Right ventricle myocardium inferior (tissue), 1 donor: ENCODE measurements at regions of chr11 and their contacts with region 1.

Region 1: GRCh38 chr11:118145285-118146227 is 7.1 kb downstream of the SCN4B start:
- DNase-seq: peak; percentile 92
- ATAC-seq: peak; percentile 89

Region 2: DNA sequence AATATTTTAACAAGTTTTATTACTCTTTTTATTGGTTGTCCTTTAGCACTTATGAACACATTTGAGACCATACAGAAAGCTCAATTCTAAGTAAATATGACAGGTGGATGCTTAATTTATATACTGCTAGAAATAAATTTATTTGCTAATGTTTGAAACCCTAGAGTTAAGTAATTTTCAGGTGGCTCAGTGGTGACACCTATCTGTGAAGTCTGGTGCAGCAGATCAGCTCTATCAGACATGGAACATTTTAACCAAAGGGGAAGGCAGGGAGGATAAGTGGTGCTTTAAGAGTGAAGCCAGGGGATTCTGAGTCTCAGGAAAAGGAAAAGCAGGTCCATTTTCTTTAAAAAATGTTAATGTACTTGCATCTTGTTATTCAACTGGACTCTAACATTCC is 524.3 kb before region 1 on chr11:
- intact Hi-C with region 1: no loop called
- DNase-seq: no peak
- ATAC-seq: no peak

Region 3: DNA sequence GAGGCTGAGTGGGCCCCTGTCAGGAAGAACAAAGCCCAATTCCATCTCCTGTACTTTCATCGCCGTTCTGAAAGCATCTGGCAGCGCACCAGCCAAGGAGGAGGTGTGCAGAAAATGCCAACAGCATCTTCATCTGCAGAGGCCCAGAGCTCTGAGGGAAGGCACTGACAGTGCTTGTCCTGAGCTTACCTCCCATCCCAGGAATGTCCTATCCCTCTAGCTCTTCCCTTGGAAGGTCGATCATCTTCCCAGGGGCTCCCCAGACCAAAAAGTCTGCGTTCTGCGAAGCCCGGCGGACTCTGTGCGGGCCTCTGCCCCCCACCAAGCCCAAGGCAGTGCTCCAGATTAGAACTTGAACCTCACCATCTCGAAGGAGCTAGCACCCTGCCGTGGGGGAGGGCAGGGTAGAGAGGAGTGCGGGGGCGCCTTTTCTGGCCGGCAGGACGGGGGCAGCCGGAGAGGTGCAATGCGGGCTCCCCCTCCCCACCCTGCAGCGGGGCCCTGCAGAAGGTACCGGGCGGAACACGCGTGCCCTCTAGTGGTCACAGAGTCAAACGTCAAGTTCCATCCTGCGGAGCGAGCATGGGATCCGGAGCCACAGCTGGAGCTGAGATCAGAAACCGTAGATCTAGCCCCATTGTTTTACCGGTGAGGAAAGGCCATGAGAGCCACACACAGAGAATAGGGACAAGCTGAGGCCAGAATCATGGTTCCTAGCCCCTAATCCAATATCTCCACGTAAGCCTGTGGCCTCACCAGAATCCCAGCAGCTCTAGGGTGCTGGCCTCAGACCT is 25.9 kb after region 1 on chr11:
- intact Hi-C with region 1: loop called (anchors 1 kb)
- DNase-seq: peak; percentile 88
- ATAC-seq: peak; percentile 66

Region 4: GRCh38 chr11:118186346-118187107 is 41.0 kb after region 1 on chr11:
- intact Hi-C with region 1: no loop called
- DNase-seq: no peak
- ATAC-seq: peak; percentile 50

Region 5: DNA sequence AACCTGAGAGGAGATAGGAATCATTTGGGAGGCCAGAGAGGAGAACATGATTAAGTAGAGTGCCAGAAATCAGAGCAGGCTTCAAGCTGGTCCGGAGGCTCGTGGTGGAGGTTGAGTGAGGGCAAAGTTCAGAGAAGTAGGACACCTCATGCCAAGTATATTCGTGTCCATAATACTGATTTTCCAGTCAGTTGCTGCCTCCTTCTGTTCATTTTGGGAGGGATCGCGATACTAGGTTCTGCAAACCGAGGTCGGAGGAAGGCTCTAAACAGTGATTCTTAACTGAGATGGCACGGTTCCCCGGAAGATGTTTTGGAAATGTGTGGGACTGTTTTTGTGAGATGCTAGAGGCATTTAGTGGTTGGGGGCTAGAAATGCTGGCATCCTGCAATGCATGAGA is 145.4 kb after region 1 on chr11:
- intact Hi-C with region 1: loop called (anchors 1 kb)
- DNase-seq: no peak
- ATAC-seq: peak; percentile 75

Region 6: DNA sequence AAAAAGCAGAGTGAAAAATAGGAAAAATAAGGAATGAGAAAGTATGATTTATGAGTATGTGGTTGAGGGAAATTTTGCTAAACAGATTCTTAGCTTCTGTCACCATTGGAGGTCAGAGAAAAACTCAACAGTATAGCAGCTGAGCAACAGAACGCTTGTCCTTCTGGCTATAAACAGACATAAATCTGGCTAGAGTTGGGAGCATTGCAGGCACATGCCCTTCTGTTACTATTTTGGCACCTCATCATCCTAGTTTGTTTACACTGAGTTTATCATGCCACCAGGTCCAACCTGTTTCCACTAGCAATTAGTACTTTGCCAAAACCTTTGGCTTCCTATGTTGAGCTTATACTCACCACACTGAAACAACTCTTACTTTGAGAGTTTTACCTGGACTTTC is 220.7 kb after region 1 on chr11:
- intact Hi-C with region 1: loop called (anchors 2 kb)
- DNase-seq: no peak
- ATAC-seq: peak; percentile 90

Region 7: DNA sequence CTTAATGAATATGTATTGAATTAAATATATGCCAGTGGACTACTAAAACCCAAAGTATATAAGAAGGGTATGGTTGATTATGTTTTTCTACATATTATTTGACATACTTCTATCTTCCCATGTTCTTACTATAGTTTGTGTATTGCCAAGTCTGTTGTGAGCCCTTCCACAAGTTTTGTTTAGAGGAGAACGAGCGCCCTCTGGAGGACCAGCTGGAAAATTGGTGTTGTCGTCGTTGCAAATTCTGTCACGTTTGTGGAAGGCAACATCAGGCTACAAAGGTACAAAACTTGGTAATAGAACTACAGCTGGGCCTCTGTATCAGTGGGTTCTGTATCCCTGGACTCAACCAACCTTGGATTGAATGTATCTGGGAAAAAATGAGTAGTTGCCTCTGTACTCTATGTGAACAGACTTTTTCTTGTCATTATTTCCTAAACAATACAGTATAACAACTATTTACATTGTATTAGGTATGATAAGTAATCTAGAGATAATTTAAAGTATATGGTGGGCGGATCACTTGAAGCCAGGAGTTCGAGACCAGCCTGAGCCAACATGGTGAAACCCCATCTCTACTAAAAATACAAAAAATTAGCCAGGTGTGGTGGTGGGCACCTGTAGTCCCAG is 343.0 kb after region 1 on chr11:
- intact Hi-C with region 1: loop called (anchors 5 kb)
- DNase-seq: no peak
- ATAC-seq: no peak